Aorta (tissue), 5 donors: ENCODE measurements at regions of chr19 and their contacts with region 1.

Region 1: GRCh38 chr19:13262450-13262849 is 112.2 kb downstream of the IER2 start:
- DNase-seq: no peak
- ATAC-seq: no peak
- H3K4me3 ChIP-seq: no peak overlapping the region
- H3K27ac ChIP-seq: no peak overlapping the region
- H3K4me1 ChIP-seq: no peaks in the 10 kb centered on the region
- H3K27me3 ChIP-seq: no peaks in the 10 kb centered on the region

Region 2: GRCh38 chr19:12983542-12984142 is 278.8 kb before region 1 on chr19:
- intact Hi-C with region 1: loop called (anchors 2 to 5 kb)
- DNase-seq: peak; percentile 81 to 93
- ATAC-seq: peak; percentile 93
- H3K4me3 ChIP-seq: no peak overlapping the region
- H3K27ac ChIP-seq: no peak overlapping the region
- H3K4me1 ChIP-seq: no peaks in the 10 kb centered on the region
- H3K27me3 ChIP-seq: no peaks in the 10 kb centered on the region

Region 3: GRCh38 chr19:13150187-13150930 is 112.1 kb before region 1 on chr19 and contains the starts of genes IER2 and STX10:
- intact Hi-C with region 1: loop called in 1 of 2 experiments (anchors 10 kb)
- DNase-seq: peak; percentile 98 to 99
- ATAC-seq: peak; percentile 85
- H3K4me3 ChIP-seq: peak within 1 kb of the TSS; percentile 75 to 82
- H3K27ac ChIP-seq: peak within 1 kb of the TSS; percentile 92 to 93
- H3K4me1 ChIP-seq: no peaks in the 10 kb centered on the region
- H3K27me3 ChIP-seq: peaks cover 0 to 3% of the 10 kb centered on the region in 2 donors
- total RNA-seq, gene IER2: 143 to 239 TPM
- total RNA-seq, gene STX10: 33.0 to 47.4 TPM

Region 4: GRCh38 chr19:13195678-13196077 is 66.8 kb before region 1 on chr19:
- intact Hi-C with region 1: loop called (anchors 2 to 5 kb)
- DNase-seq: no peak
- ATAC-seq: no peak
- H3K4me3 ChIP-seq: no peak overlapping the region
- H3K27ac ChIP-seq: no peak overlapping the region
- H3K4me1 ChIP-seq: no peaks in the 10 kb centered on the region
- H3K27me3 ChIP-seq: no peaks in the 10 kb centered on the region

Region 5: DNA sequence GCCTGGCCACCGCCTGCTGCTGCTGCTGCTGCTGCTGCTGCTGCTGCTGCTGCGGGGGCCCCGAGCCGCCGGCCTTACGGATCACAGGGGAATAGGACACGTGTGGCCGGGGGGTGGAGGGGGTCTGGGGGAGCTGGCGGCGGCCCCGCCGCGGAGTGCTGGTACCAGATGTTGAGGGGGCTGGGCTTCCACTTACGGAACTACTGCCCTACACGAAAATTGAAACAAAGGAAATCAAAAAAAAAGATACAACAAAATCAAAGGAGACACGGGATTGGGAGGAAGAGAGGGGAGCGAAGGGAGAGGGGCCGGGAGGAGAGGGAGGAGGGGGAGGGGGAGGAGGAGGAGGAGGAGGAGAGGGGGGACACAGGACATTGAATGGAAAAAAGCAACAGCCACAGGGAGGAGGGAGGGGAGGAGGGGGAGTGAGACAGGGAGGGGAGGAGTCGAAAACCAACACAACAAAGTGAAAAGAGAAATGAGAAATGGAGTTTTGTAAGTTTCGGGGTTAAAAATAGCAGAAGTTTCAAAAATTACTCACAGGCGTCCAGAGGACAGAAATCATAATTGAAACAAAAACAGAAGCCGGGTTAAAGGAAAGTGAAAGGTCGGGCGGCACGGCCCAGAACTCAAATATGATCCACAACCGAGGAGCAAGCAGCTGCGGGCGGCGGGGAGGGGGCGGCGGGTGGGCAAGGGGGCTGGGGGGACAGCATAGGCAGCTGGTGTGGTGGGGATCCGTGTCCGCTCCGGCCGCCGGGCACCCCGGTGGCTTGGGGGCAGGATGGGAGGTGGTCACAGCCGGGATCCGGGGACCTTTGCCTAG is 54.4 kb before region 1 on chr19:
- intact Hi-C with region 1: loop called in 1 of 2 experiments (anchors 5 kb)
- DNase-seq: peak in 1 of 2 donors; percentile 79
- ATAC-seq: peak; percentile 12
- H3K4me3 ChIP-seq: peak overlapping the region; percentile 37 to 46
- H3K27ac ChIP-seq: no peak overlapping the region
- H3K4me1 ChIP-seq: no peaks in the 10 kb centered on the region
- H3K27me3 ChIP-seq: no peaks in the 10 kb centered on the region

Region 6: DNA sequence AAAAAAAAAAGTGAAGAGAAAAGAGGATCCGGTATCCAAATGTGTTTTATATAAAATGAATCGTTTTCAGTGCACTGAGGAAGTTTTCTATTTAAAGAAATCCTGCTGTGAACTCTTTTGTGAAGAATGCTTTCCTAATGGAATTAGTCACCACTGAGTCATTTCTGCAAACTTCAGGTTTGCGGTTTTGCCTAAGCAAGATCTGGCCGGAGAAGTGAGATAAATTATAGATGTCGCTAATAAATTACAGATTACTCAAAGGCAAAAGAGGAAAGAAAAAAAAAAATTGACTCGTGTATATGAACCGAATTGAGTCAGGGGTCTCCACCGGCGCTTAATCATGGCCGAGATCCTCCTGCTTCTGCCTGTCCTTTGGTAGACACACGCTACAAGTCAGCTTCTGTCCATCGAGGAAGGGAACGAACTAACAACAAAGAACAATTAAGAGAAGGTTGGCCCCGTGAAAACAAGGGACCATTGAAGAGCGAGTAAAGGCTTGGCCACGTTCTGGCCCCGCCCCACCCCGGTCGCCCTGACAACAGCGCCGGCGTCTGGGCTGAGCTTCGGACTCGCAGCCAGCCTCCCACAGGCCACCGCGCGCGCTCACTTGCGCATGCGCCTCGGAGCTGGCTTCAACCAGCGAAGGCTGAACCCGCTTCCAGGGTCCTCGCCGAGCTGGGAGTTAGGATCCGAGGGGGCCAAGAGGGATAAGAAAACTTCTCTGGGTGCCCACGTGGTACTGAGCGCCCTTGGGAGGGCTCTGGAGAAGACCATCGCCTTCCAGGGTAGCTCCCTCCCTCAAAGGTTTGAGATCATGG is 468.9 kb after region 1 on chr19:
- intact Hi-C with region 1: loop called in 1 of 2 experiments (anchors 10 kb)
- DNase-seq: peak; percentile 97 to 98
- ATAC-seq: peak; percentile 98
- H3K4me3 ChIP-seq: peak overlapping the region; percentile 44 to 75
- H3K27ac ChIP-seq: peak overlapping the region; percentile 90 to 97
- H3K4me1 ChIP-seq: no peaks in the 10 kb centered on the region
- H3K27me3 ChIP-seq: no peaks in the 10 kb centered on the region